Psoas muscle (tissue), 8 donors: ENCODE measurements at regions of chr3 and their contacts with region 1.

Region 1: GRCh38 chr3:38738630-38739395 is 77.2 kb downstream of the SCN10A start:
- DNase-seq: no peak
- ATAC-seq: no peak
- H3K4me3 ChIP-seq: no peak overlapping the region
- H3K27ac ChIP-seq: no peak overlapping the region
- H3K4me1 ChIP-seq: no peaks in the 10 kb centered on the region
- H3K27me3 ChIP-seq: peaks cover 0 to 4% (median 2%) of the 10 kb centered on the region in 3 donors
- CTCF ChIP-seq: peak; percentile 19

Region 2: GRCh38 chr3:38669668-38670067 is 69.1 kb before region 1 on chr3:
- intact Hi-C with region 1: no loop called
- DNase-seq: no peak
- ATAC-seq: no peak
- H3K4me3 ChIP-seq: no peak overlapping the region
- H3K27ac ChIP-seq: no peak overlapping the region
- H3K4me1 ChIP-seq: no peaks in the 10 kb centered on the region
- H3K27me3 ChIP-seq: no peaks in the 10 kb centered on the region
- CTCF ChIP-seq: no peak

Region 3: DNA sequence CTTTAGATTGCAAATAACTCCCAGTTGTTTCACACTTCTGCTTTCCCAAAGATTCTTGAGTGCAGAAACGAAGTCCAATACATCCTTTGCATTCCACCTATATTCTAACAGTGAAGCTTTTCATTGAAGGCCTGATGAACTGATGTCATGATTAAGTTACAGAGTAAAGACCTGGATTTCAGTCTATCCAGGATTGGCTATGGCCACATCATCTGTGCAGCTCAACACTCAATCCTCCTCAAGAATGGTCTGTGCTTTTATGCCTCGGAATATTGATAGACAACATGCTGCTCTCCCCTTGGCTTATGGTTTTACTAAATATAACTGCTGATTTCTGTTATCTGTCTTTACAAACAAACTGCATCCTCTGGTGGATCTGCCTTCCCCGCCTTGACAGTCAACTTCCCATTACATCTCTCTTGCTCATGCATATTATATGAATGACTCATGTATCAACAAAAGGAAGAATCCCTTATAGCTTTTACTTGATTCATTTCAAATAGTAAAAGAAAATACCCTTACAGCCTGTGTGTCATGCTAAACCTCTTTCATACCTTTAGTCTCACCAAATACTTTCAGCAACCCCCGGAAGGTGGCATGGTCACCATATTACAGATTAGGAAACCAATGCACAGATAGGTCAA is 253.4 kb after region 1 on chr3:
- intact Hi-C with region 1: loop called in 1 of 2 experiments (anchors 10 kb)
- DNase-seq: no peak
- ATAC-seq: no peak
- H3K4me3 ChIP-seq: no peak overlapping the region
- H3K27ac ChIP-seq: no peak overlapping the region
- H3K4me1 ChIP-seq: no peaks in the 10 kb centered on the region
- H3K27me3 ChIP-seq: peaks cover 0 to 2% (median 0%) of the 10 kb centered on the region in 3 donors
- CTCF ChIP-seq: no peak

Region 4: GRCh38 chr3:39291903-39292329 is 553.1 kb after region 1 on chr3:
- intact Hi-C with region 1: no loop called
- DNase-seq: peak; percentile 68 to 76
- ATAC-seq: peak; percentile 57 to 66 (median 60)
- H3K4me3 ChIP-seq: no peak overlapping the region
- H3K27ac ChIP-seq: no peak overlapping the region
- H3K4me1 ChIP-seq: peaks cover 12% of the 10 kb centered on the region
- H3K27me3 ChIP-seq: no peaks in the 10 kb centered on the region
- CTCF ChIP-seq: peak; percentile 91